GM10248 (cell line): ENCODE measurements at regions of chr5 and their contacts with region 1.

Region 1: GRCh38 chr5:134275822-134276221 is 49.9 kb upstream of the PPP2CA start:
- DNase-seq: peak; percentile 25
- CTCF ChIP-seq: no peak

Region 2: DNA sequence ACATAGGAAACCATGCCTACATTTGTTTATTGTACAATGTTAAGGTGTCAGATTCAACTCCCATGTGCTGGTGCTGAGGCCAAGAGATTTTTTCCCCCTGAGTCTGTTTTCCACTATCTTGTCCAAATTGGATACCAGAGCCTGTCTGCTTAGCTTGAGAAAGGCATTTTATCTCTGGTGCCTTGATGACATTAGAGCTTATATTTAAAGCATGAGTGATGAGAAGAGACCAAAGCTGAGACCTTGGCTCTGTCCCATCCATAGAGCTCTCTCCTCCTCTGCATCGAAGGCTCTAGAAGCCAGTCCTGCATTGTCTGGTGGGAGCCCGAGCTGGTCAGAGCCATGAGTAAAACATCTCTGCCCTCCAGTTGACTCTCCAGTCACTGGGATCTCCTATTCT is 39.5 kb before region 1 on chr5:
- CTCF ChIA-PET with region 1: no interaction called
- POLR2A ChIA-PET with region 1: no interaction called
- DNase-seq: no peak
- CTCF ChIP-seq: no peak

Region 3: DNA sequence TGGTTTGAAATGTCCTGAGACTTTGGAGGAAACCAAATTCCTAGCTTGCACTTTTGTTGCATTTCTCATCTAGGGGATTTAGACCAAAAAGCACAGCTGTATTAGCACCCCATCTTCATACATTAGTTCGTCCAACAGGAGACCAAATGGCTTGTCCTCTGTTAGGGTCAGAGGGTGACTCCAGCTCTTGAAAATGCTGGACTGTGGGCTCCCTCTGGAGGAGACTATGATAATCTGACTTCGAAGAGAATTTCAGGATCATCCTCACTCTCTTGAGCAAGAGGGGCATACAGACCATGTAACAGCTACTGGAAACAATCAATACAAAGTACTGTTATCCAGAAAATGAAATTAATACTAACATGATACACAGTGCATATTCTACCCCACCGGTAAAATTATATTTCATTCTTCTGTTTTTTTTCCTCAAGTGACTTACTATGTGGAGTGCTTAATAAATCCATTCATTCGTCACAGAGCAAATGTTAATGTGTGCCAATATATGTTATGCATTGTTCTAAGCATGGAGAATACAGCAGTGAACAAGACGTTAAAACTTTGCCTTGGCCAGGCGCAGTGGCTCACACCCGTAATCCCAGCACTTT is 13.8 kb after region 1 on chr5:
- CTCF ChIA-PET with region 1: interaction called, 41 read pairs
- POLR2A ChIA-PET with region 1: no interaction called
- DNase-seq: peak; percentile 62
- CTCF ChIP-seq: peak; percentile 56